ENCODE measurements at regions of chr6 and their contacts with region 1.

Region 1: DNA sequence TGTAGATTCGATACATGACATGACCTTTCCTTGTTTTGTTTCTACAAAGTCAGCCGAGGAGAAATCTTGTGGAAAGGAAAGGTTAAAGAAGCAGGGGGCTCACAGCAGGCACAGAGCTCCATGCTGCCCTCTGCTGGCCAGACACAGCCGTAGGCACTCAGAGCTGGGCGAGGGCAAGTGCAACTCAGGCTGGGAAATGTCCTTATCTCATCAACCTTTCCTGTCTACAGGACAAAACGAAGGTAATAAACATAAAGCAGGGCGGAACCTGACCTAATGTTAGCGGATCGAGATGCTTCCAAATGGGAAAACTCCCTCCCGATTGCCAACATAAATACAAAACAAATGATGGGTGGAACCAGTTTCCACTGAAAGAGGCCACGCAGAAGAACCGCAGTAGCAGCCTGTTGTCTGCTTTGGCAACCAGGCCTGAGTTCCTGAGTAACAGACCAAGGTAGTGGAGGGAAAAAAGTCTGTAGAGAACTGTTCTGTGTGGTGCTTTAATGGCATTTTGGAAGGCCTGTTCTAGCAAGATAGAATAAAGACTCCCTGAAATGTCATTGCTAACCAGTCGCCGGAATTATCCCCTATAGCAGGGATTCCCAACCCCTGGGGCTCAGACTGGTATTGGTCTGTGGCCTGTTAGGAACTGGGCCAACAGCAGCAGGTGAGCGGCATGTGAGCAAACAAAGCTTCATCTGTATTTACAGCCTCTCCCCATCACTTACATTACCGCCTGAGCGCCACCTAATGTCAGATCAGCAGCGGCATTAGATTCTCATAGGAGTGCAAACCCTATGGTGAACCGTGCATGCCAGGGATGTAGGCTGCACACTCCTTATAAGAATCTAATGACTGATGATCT is 85.2 kb downstream of the MBOAT1 start:
- DNase-seq: peak; percentile 11
- ATAC-seq: peak; percentile 99
- H3K4me3 ChIP-seq: no peak overlapping the region
- H3K27ac ChIP-seq: no peak overlapping the region
- H3K4me1 ChIP-seq: no peaks in the 10 kb centered on the region
- H3K27me3 ChIP-seq: no peaks in the 10 kb centered on the region
- CTCF ChIP-seq: peak; percentile 82 to 96 (median 94)
- EP300 ChIP-seq: no peak
- POLR2A ChIP-seq: no peak
- RAD21 ChIP-seq: peak; percentile 54

Region 2: DNA sequence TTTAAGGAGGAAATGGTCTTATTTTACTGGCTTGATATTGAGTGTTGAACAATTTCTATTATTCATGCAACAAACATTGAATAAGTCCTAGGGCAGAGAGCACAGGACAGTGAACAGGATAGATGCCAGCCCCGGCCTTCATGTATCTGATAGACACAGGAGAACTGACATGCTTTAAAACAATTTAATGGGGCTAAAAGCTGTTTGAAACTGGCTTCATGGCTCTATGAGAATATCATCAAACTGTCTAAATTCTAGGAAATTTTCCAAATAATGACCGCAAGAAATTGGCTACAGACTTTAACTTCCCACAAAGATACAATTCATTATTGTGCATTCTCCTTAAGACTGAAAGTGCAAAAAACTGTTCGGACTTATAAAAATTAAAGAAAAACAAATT is 220.8 kb before region 1 on chr6:
- CTCF ChIA-PET with region 1: no interaction called
- POLR2A ChIA-PET with region 1: no interaction called
- RAD21 ChIA-PET with region 1: no interaction called
- SMC1A ChIA-PET with region 1: no interaction called
- in situ Hi-C with region 1: no loop called
- intact Hi-C with region 1: no loop called
- DNase-seq: no peak
- ATAC-seq: no peak
- H3K4me3 ChIP-seq: no peak overlapping the region
- H3K27ac ChIP-seq: no peak overlapping the region
- H3K4me1 ChIP-seq: no peaks in the 10 kb centered on the region
- H3K27me3 ChIP-seq: no peaks in the 10 kb centered on the region
- CTCF ChIP-seq: no peak
- EP300 ChIP-seq: no peak
- POLR2A ChIP-seq: no peak
- RAD21 ChIP-seq: no peak

Region 3: GRCh38 chr6:20092071-20092566 is 34.9 kb before region 1 on chr6:
- CTCF ChIA-PET with region 1: interaction called, 82 read pairs
- POLR2A ChIA-PET with region 1: no interaction called
- RAD21 ChIA-PET with region 1: interaction called, 16 read pairs
- SMC1A ChIA-PET with region 1: interaction called, 14 read pairs
- in situ Hi-C with region 1: no loop called
- intact Hi-C with region 1: loop called (anchors 1 kb)
- DNase-seq: peak; percentile 17
- ATAC-seq: peak; percentile 54
- H3K4me3 ChIP-seq: no peak overlapping the region
- H3K27ac ChIP-seq: no peak overlapping the region
- H3K4me1 ChIP-seq: no peaks in the 10 kb centered on the region
- H3K27me3 ChIP-seq: no peaks in the 10 kb centered on the region
- CTCF ChIP-seq: peak; percentile 53 to 70 (median 69); a peak in 5 of 6 replicates
- EP300 ChIP-seq: no peak
- POLR2A ChIP-seq: no peak
- RAD21 ChIP-seq: peak; percentile 78

Region 4: GRCh38 chr6:20109526-20109925 is 17.5 kb before region 1 on chr6:
- CTCF ChIA-PET with region 1: interaction called, 29 read pairs
- POLR2A ChIA-PET with region 1: interaction called, 4 read pairs
- RAD21 ChIA-PET with region 1: no interaction called
- SMC1A ChIA-PET with region 1: interaction called, 17 read pairs
- in situ Hi-C with region 1: no loop called
- intact Hi-C with region 1: no loop called
- DNase-seq: no peak
- ATAC-seq: no peak
- H3K4me3 ChIP-seq: no peak overlapping the region
- H3K27ac ChIP-seq: no peak overlapping the region
- H3K4me1 ChIP-seq: no peaks in the 10 kb centered on the region
- H3K27me3 ChIP-seq: no peaks in the 10 kb centered on the region
- CTCF ChIP-seq: no peak
- EP300 ChIP-seq: no peak
- POLR2A ChIP-seq: no peak
- RAD21 ChIP-seq: no peak

Region 5: DNA sequence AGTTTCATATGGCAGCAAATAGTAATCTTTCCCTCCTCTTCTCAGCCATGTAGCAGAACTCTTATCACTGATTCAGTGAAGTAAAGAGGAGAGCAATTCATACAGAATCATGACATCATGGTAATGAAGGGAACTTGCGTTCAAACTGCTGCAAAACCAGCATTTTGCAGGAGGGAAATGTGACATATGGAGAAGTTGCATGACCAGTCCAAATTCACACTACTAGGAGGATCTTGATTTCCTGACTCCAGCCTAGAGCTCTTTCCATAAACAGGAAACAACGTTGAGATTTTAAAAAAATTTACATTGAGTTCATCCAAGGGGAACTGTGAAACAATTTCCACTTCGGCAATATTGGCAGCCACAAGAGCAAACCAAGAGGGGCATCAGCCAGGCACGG is 21.4 kb after region 1 on chr6:
- CTCF ChIA-PET with region 1: interaction called, 12 read pairs
- POLR2A ChIA-PET with region 1: interaction called, 4 read pairs
- RAD21 ChIA-PET with region 1: no interaction called
- SMC1A ChIA-PET with region 1: no interaction called
- in situ Hi-C with region 1: no loop called
- intact Hi-C with region 1: no loop called
- DNase-seq: no peak
- ATAC-seq: no peak
- H3K4me3 ChIP-seq: no peak overlapping the region
- H3K27ac ChIP-seq: no peak overlapping the region
- H3K4me1 ChIP-seq: no peaks in the 10 kb centered on the region
- H3K27me3 ChIP-seq: no peaks in the 10 kb centered on the region
- CTCF ChIP-seq: no peak
- EP300 ChIP-seq: no peak
- POLR2A ChIP-seq: no peak
- RAD21 ChIP-seq: no peak

Region 6: DNA sequence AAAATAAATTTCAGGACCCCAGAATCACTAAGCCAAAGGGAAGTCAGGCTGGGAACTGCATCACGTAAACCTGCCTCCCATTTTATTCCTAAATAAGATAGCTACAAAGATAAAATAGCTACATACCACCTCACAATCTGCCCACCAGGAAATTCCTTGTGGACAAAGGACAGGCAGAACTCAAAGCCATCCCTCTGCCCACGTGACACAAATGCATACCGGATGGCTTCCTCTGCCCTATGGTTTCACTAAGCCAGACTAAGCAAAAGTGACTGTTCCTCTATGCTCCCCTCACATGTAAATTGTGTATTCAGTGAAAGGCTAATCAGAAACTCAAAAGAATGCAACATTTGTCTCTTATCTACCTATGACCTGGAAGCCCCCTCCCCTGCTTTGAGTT is 70.2 kb after region 1 on chr6:
- CTCF ChIA-PET with region 1: interaction called, 11 read pairs
- POLR2A ChIA-PET with region 1: no interaction called
- RAD21 ChIA-PET with region 1: interaction called, 10 read pairs
- SMC1A ChIA-PET with region 1: interaction called, 20 read pairs
- in situ Hi-C with region 1: no loop called
- intact Hi-C with region 1: no loop called
- DNase-seq: no peak
- ATAC-seq: peak; percentile 41
- H3K4me3 ChIP-seq: no peak overlapping the region
- H3K27ac ChIP-seq: peak overlapping the region; percentile 38
- H3K4me1 ChIP-seq: peaks cover 38% of the 10 kb centered on the region
- H3K27me3 ChIP-seq: no peaks in the 10 kb centered on the region
- CTCF ChIP-seq: no peak
- EP300 ChIP-seq: no peak
- POLR2A ChIP-seq: no peak
- RAD21 ChIP-seq: no peak

Region 7: GRCh38 chr6:20212392-20213217 is 85.6 kb after region 1 on chr6 and contains the start of gene MBOAT1:
- CTCF ChIA-PET with region 1: interaction called, 31 read pairs
- POLR2A ChIA-PET with region 1: interaction called, 3 read pairs
- RAD21 ChIA-PET with region 1: interaction called, 11 read pairs
- SMC1A ChIA-PET with region 1: interaction called, 16 read pairs
- in situ Hi-C with region 1: no loop called
- intact Hi-C with region 1: loop called (anchors 5 kb)
- DNase-seq: no peak
- ATAC-seq: peak; percentile 89
- H3K4me3 ChIP-seq: peak within 1 kb of the TSS; percentile 82
- H3K27ac ChIP-seq: peak within 1 kb of the TSS; percentile 77
- H3K4me1 ChIP-seq: peaks cover 10% of the 10 kb centered on the region
- H3K27me3 ChIP-seq: no peaks in the 10 kb centered on the region
- CTCF ChIP-seq: peak in 2 of 3 experiments; percentile 7 to 16; a peak in 1 of 6 replicates
- EP300 ChIP-seq: no peak
- POLR2A ChIP-seq: peak; percentile 86
- RAD21 ChIP-seq: no peak
- polyA plus RNA-seq, gene MBOAT1: 0.39 to 0.44 TPM